GM13976 (cell line): ENCODE measurements at regions of chr6 and their contacts with region 1.

Region 1: DNA sequence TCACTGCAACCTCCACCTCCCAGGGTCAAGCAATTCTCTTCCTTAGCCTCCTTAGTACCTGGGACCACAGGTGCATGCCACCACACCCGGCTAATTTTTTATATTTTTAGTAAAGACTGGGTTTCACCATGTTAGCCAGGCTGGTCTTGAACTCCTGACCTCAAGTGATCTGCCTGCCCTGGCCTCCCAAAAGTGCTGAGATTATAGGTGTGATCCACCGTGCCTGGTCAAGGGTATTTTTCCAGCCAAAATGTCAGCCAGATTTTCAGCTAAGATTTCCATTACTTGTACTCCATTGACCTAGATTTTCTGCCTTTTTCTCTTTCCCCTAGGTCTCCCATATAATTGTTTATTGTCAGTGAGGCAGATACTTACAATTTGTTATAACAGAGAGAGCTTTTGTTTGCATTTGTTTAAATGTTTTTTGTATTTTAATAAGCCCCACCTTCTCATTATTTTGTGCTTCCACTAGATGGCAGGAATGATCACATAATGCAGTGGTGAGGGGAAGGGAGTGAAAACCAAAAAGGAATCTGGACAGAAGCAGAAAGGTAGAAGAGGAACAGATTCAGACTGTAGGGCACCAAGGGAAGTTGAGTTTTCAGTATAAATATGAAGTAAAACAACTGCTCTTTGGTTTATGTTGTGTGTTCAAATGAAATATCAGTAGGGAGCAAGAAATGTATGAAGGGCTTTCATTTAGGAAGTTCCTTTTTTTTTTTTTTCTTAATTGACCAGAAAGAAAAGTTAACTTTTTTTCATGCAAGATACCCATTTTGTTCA is 29.7 kb downstream of the RPF2 start:
- DNase-seq: peak; percentile 62
- CTCF ChIP-seq: peak; percentile 57

Region 2: DNA sequence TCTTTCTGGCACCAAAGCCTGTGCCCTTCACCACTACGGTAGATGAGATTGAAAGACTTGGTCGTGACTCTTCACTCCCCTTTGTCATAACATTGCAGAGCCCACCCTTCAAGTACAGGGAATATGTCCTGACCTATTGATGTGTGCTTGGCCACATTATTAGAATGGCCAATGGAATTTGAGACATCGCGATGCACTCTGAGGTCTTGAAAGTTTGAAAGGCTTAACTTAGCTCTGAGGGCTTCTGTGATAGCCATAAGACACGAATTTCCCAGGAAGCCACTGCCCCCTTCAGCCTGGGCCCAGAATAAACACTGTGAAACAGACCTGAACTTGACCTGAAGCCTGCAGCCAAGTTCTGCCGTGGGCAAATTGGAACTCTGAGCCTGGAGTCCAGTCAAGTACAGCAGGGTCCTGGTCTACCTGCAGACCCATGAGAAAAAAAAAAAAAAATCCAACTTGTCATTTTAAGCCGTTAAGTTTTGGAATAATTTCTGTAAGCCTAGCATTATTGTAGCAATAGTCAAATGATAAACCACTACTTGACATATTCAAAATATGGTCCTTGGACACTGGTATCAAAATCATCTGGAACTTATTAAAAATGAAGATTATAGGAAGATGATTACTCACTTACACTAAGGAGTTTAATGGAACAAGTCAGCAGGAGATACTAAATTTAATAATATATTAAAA is 631.1 kb after region 1 on chr6:
- in situ Hi-C with region 1: loop called (anchors 25 kb)
- DNase-seq: peak; percentile 73
- CTCF ChIP-seq: peak; percentile 68